Naive thymus-derived CD4-positive, alpha-beta T cell (primary cell): ENCODE measurements at regions of chr12 and their contacts with region 1.

Region 1: GRCh38 chr12:132908145-132909044 is 21.0 kb upstream of the CHFR start:
- DNase-seq: peak; percentile 79 to 98 (median 96)
- ATAC-seq: peak; percentile 93
- H3K4me3 ChIP-seq: peak overlapping the region; percentile 72
- H3K4me3 Mint-ChIP-seq: peak overlapping the region; percentile 83 to 98 (median 94)
- H3K27ac ChIP-seq: peak overlapping the region; percentile 92
- H3K27ac Mint-ChIP-seq: peak overlapping the region; percentile 92 to 99 (median 97)
- H3K4me1 ChIP-seq: no peaks in the 10 kb centered on the region
- H3K4me1 Mint-ChIP-seq: peaks cover 6 to 41% (median 22%) of the 10 kb centered on the region in 7 donors
- H3K27me3 ChIP-seq: no peaks in the 10 kb centered on the region
- H3K27me3 Mint-ChIP-seq: peaks cover 0 to 29% (median 0%) of the 10 kb centered on the region in 5 donors

Region 2: DNA sequence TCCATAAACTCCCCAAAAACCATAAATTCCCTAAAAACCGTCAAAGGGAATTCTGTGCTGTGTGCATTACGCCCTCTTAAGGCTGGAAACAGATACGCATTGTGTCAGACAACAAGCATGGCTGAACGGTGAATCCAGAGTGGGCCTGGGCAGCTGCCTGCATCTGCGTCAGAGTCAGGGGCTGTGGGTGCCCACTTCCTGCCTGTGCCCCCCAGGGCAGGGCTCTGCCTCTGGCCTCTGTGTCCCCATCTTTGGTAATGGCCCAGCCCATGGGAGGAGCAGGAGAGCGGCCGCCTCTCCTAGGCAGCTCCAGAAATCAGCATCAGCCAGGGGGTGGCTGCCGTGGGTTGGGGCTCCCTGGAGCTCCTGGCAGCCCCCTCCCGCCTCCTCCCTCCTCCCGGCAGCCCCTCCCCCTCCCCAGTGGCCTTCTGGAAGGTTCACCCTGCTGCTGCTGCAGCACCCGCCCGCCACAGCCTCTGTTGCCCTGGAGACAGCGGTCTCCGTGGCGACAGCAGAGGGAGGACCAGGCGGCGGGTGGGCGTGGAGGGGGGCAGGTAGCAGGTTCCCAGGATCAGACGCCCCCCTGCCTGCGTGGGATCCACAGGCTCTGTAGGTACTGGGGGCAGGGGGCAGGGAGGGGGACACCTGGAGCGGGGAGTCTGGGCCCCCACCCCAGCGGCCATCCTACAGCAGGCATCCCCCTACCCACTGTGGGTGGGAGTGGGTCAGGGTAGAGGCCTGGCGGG is 1074.3 kb before region 1 on chr12:
- CTCF ChIA-PET with region 1: no interaction called
- POLR2A ChIA-PET with region 1: no interaction called
- intact Hi-C with region 1: no loop called
- DNase-seq: no peak
- ATAC-seq: no peak
- H3K4me3 ChIP-seq: no peak overlapping the region
- H3K4me3 Mint-ChIP-seq: no peak overlapping the region
- H3K27ac ChIP-seq: no peak overlapping the region
- H3K27ac Mint-ChIP-seq: no peak overlapping the region
- H3K4me1 ChIP-seq: peaks cover 0 to 19% of the 10 kb centered on the region in 2 donors
- H3K4me1 Mint-ChIP-seq: peaks cover 4 to 10% (median 8%) of the 10 kb centered on the region in 7 donors
- H3K27me3 ChIP-seq: no peaks in the 10 kb centered on the region
- H3K27me3 Mint-ChIP-seq: peaks cover 10 to 32% (median 13%) of the 10 kb centered on the region in 5 donors

Region 3: GRCh38 chr12:132687208-132688164 is 220.9 kb before region 1 on chr12 and contains the starts of genes POLE and PXMP2:
- CTCF ChIA-PET with region 1: no interaction called
- POLR2A ChIA-PET with region 1: no interaction called
- intact Hi-C with region 1: loop called in 1 of 2 experiments (anchors 1 kb)
- DNase-seq: peak; percentile 85 to 94 (median 89)
- ATAC-seq: peak; percentile 98
- H3K4me3 ChIP-seq: peak within 1 kb of the TSS; percentile 47
- H3K4me3 Mint-ChIP-seq: peak within 1 kb of the TSS; percentile 65 to 89 (median 84)
- H3K27ac ChIP-seq: peak within 1 kb of the TSS; percentile 58
- H3K27ac Mint-ChIP-seq: peak within 1 kb of the TSS in 3 of 9 donors; percentile 45 to 92 (median 87)
- H3K4me1 ChIP-seq: peaks cover 4 to 14% of the 10 kb centered on the region in 2 donors
- H3K4me1 Mint-ChIP-seq: peaks cover 0 to 31% (median 22%) of the 10 kb centered on the region in 7 donors
- H3K27me3 ChIP-seq: no peaks in the 10 kb centered on the region
- H3K27me3 Mint-ChIP-seq: no peaks in the 10 kb centered on the region
- total RNA-seq, gene POLE: 54.5 to 138 (median 62.1) TPM
- total RNA-seq, gene PXMP2: 2.6 to 26.8 (median 5.4) TPM

Region 4: GRCh38 chr12:132812631-132813305 is 95.6 kb before region 1 on chr12:
- CTCF ChIA-PET with region 1: interaction called, 4 read pairs
- POLR2A ChIA-PET with region 1: no interaction called
- intact Hi-C with region 1: loop called in 1 of 2 experiments (anchors 1 kb)
- DNase-seq: no peak
- ATAC-seq: no peak
- H3K4me3 ChIP-seq: no peak overlapping the region
- H3K4me3 Mint-ChIP-seq: no peak overlapping the region
- H3K27ac ChIP-seq: no peak overlapping the region
- H3K27ac Mint-ChIP-seq: no peak overlapping the region
- H3K4me1 ChIP-seq: peaks cover 0 to 5% of the 10 kb centered on the region in 2 donors
- H3K4me1 Mint-ChIP-seq: peaks cover 2 to 18% (median 5%) of the 10 kb centered on the region in 7 donors
- H3K27me3 ChIP-seq: no peaks in the 10 kb centered on the region
- H3K27me3 Mint-ChIP-seq: no peaks in the 10 kb centered on the region

Region 5: GRCh38 chr12:132866251-132866828 is 42.1 kb before region 1 on chr12:
- CTCF ChIA-PET with region 1: interaction called, 3 read pairs
- POLR2A ChIA-PET with region 1: interaction called, 5 read pairs
- intact Hi-C with region 1: loop called in 1 of 2 experiments (anchors 2 kb)
- DNase-seq: no peak
- ATAC-seq: no peak
- H3K4me3 ChIP-seq: no peak overlapping the region
- H3K4me3 Mint-ChIP-seq: peak overlapping the region in 7 of 10 donors; percentile 48 to 85 (median 77)
- H3K27ac ChIP-seq: peak overlapping the region; percentile 71
- H3K27ac Mint-ChIP-seq: peak overlapping the region; percentile 81 to 99 (median 95)
- H3K4me1 ChIP-seq: peaks cover 0 to 25% of the 10 kb centered on the region in 2 donors
- H3K4me1 Mint-ChIP-seq: peaks cover 10 to 39% (median 23%) of the 10 kb centered on the region in 7 donors
- H3K27me3 ChIP-seq: no peaks in the 10 kb centered on the region
- H3K27me3 Mint-ChIP-seq: no peaks in the 10 kb centered on the region

Region 6: DNA sequence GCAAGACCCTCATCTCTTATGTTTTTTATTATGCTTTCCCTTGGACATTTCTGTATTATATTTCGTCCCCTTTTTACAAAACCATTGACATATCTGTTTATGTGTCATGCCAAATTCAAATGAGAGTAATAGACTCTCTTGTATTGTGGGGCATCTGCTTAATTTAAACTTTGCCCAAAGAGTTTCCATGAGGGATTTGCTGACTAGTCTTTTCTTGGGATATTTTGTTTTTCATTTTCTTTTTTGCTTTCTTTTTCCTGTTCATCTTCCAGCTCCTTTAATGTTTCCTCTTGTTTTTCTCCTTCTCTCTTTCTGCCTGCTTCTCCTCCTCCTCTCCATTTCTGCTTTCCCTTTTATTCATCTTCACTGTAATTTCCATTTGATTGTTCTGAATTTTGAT is 64.0 kb after region 1 on chr12:
- CTCF ChIA-PET with region 1: no interaction called
- POLR2A ChIA-PET with region 1: no interaction called
- intact Hi-C with region 1: no loop called
- DNase-seq: no peak
- ATAC-seq: no peak
- H3K4me3 ChIP-seq: no peak overlapping the region
- H3K4me3 Mint-ChIP-seq: no peak overlapping the region
- H3K27ac ChIP-seq: no peak overlapping the region
- H3K27ac Mint-ChIP-seq: no peak overlapping the region
- H3K4me1 ChIP-seq: no peaks in the 10 kb centered on the region
- H3K4me1 Mint-ChIP-seq: no peaks in the 10 kb centered on the region
- H3K27me3 ChIP-seq: no peaks in the 10 kb centered on the region
- H3K27me3 Mint-ChIP-seq: peaks cover 0 to 33% (median 13%) of the 10 kb centered on the region in 5 donors

Region 7: GRCh38 chr12:132986001-132986912 is 77.9 kb after region 1 on chr12 and contains the start of gene ZNF26:
- CTCF ChIA-PET with region 1: no interaction called
- POLR2A ChIA-PET with region 1: interaction called, 8 read pairs
- intact Hi-C with region 1: loop called (anchors 1 kb)
- DNase-seq: peak; percentile 66 to 90 (median 86)
- ATAC-seq: peak; percentile 99
- H3K4me3 ChIP-seq: peak within 1 kb of the TSS; percentile 96
- H3K4me3 Mint-ChIP-seq: peak within 1 kb of the TSS; percentile 84 to 98 (median 94)
- H3K27ac ChIP-seq: peak within 1 kb of the TSS; percentile 87
- H3K27ac Mint-ChIP-seq: peak within 1 kb of the TSS; percentile 90 to 98 (median 97)
- H3K4me1 ChIP-seq: peaks cover 11 to 12% of the 10 kb centered on the region in 2 donors
- H3K4me1 Mint-ChIP-seq: peaks cover 23 to 42% (median 39%) of the 10 kb centered on the region in 7 donors
- H3K27me3 ChIP-seq: no peaks in the 10 kb centered on the region
- H3K27me3 Mint-ChIP-seq: peaks cover 0 to 10% (median 4%) of the 10 kb centered on the region in 5 donors
- total RNA-seq, gene ZNF26: 16.0 to 38.8 (median 33.6) TPM

Region 8: GRCh38 chr12:133130038-133130807 is 221.8 kb after region 1 on chr12 and contains the starts of genes ZNF10 and ZNF891:
- CTCF ChIA-PET with region 1: no interaction called
- POLR2A ChIA-PET with region 1: no interaction called
- intact Hi-C with region 1: loop called (anchors 1 kb)
- DNase-seq: peak; percentile 96 to 99 (median 98)
- ATAC-seq: peak; percentile 93
- H3K4me3 ChIP-seq: peak within 1 kb of the TSS; percentile 62
- H3K4me3 Mint-ChIP-seq: peak within 1 kb of the TSS; percentile 90 to 99 (median 94)
- H3K27ac ChIP-seq: peak within 1 kb of the TSS; percentile 98
- H3K27ac Mint-ChIP-seq: peak within 1 kb of the TSS; percentile 97 to 100 (median 99)
- H3K4me1 ChIP-seq: peaks cover 0 to 7% of the 10 kb centered on the region in 2 donors
- H3K4me1 Mint-ChIP-seq: peaks cover 15 to 51% (median 27%) of the 10 kb centered on the region in 7 donors
- H3K27me3 ChIP-seq: no peaks in the 10 kb centered on the region
- H3K27me3 Mint-ChIP-seq: no peaks in the 10 kb centered on the region
- total RNA-seq, gene ZNF10: 5.2 to 35.0 (median 29.2) TPM
- total RNA-seq, gene ZNF891: 2.4 to 7.9 (median 6.6) TPM